Right cardiac atrium (tissue), 5 donors: ENCODE measurements at regions of chr1 and their contacts with region 1.

Region 1: DNA sequence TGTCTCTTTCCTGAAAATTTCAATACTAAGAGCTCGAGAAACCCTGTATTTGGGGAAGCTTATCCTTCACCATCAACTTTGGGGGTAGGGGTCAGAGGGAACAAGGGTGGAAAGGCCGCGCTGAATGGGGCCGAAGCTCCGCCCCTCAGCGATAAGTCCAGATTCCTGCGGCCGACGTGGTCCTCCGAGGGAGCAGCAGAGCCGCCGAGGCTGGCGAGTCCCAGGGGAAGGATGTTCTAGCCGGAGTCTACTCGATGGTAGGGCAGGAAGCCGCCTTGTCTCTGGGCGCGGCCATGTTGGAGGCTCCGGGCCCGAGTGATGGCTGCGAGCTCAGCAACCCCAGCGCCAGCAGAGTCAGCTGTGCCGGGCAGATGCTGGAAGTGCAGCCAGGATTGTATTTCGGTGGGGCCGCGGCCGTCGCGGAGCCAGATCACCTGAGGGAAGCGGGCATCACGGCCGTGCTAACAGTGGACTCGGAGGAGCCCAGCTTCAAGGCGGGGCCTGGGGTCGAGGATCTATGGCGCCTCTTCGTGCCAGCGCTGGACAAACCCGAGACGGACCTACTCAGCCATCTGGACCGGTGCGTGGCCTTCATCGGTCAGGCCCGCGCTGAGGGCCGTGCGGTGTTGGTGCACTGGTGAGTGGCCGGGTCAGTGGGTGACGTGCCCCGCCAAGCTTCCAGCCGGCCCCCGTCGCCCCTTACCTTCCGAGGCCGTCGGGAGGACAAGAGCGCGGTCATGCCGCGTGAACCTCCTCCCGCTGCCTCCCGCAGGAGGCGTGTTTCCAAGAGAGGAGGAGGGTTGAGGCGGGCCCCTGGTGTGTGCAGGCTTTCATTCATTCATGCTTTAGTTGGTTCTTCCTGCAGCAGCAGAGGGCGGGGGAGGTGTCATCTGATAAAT is at the start of gene DUSP12:
- DNase-seq: peak; percentile 96 to 98 (median 97)
- ATAC-seq: peak; percentile 99
- H3K4me3 ChIP-seq: peak within 1 kb of the TSS; percentile 81
- H3K27ac ChIP-seq: peak within 1 kb of the TSS; percentile 86
- H3K4me1 ChIP-seq: peaks cover 5% of the 10 kb centered on the region
- H3K27me3 ChIP-seq: no peaks in the 10 kb centered on the region
- total RNA-seq, gene DUSP12: 7.1 to 13.5 (median 10.3) TPM

Region 2: DNA sequence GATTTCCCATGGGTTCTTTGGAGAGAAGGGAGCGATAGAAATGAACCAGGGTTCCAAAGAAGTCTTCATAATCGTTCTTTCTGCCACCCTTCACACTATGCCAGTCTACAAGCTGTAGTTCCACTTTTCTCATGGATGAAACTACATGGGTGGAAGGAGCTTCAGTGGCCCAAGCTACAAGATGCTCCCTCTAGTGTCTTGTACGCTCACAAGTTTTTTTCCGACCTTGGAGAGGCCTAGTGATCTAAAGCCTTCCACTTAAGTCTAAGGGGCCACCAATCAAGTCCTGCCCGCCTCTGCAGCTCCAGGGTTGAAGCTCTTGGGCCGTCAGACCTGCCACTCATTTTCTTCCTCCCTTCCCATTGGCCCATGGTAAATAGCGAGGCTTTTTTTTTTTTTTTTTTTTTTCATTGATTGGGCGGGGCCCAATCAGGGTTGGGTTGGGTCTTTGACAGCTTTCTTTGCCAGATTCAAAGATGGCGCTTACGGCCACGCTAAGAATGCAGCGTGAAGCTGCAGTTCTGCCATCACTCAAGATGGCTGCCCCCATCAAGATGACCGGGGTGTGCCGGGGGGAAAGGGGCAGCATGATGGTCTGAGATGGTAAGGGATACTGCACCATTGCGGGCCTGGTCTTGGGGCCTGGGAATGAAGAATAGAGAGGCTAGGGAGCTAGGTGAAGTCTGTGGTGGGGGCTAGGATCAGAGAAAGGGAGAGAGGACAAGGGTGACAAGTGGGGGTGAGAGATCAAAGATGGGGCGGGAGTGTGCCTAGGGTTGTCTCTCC is 524.0 kb before region 1 on chr1 and contains the start of gene TOMM40L:
- intact Hi-C with region 1: no loop called
- DNase-seq: peak; percentile 94 to 96 (median 94)
- ATAC-seq: peak; percentile 97
- H3K4me3 ChIP-seq: peak within 1 kb of the TSS; percentile 73
- H3K27ac ChIP-seq: peak within 1 kb of the TSS; percentile 71
- H3K4me1 ChIP-seq: peaks cover 6% of the 10 kb centered on the region
- H3K27me3 ChIP-seq: no peaks in the 10 kb centered on the region
- total RNA-seq, gene TOMM40L: 27.7 to 42.9 (median 32.1) TPM

Region 3: DNA sequence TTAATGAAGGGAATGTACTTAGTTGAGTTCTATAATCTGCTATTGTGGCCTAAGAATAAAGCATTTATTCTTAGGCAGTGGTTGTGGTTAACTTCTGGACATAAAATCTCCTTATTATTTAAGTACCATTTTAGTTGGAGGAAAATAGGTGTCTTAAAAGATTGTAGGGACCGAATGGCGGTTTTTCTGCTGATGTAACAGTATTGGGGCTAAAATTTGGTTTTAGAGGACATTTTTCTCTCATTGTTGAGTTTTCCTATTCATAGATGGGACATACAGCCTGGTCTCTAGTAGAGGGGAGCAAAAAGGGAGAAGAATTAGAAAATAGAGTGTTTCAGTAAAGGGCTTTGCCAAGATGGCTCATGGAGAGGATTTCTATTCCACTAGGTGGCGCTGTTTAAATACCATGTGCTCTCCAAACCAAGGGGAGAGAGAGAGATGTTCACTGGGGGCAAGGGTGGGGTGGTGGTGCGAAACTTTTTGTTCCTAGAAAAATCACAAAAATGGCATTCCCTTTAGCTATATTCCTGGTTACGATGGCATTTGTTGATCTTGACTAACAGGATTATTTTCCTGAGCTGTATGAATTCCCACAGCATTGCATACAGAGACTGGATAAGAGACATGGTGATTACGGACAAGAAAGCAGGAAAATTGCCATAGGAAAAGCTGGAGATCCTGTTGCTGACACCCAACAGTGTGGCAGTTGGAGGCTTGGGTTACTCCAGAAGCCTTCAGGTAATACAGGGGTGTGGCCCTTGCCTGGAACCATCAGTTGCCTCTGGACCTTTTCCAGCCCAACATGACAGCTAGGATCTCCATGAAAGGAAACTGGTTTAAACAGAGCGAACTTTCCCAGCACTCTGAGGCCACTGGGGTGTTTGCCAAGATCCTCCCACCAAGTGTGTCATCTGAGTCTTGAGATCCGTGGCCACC is 262.7 kb before region 1 on chr1:
- intact Hi-C with region 1: loop called in 3 of 4 experiments (anchors 10 kb)
- DNase-seq: peak; percentile 63 to 78 (median 69)
- ATAC-seq: peak; percentile 85 to 87
- H3K4me3 ChIP-seq: no peak overlapping the region
- H3K27ac ChIP-seq: no peak overlapping the region
- H3K4me1 ChIP-seq: no peaks in the 10 kb centered on the region
- H3K27me3 ChIP-seq: no peaks in the 10 kb centered on the region